ENCODE measurements at regions of chr9 and their contacts with region 1.

Region 1: GRCh38 chr9:113591001-113591898 is 127.7 kb downstream of the RGS3 start:
- DNase-seq: peak; percentile 78
- H3K4me3 ChIP-seq: no peak overlapping the region; a peak in 1 of 4 replicates
- H3K27ac ChIP-seq: no peak overlapping the region
- H3K4me1 ChIP-seq: peaks cover 11 to 32% of the 10 kb centered on the region in 2 experiments
- H3K27me3 ChIP-seq: no peaks in the 10 kb centered on the region
- CTCF ChIP-seq: peak; percentile 93
- EP300 ChIP-seq: no peak
- RAD21 ChIP-seq: peak; percentile 99

Region 2: GRCh38 chr9:113446323-113446740 is 144.9 kb before region 1 on chr9:
- CTCF ChIA-PET with region 1: interaction called, 449 read pairs
- POLR2A ChIA-PET with region 1: no interaction called
- DNase-seq: peak; percentile 72
- H3K4me3 ChIP-seq: no peak overlapping the region; a peak in 1 of 4 replicates
- H3K27ac ChIP-seq: no peak overlapping the region
- H3K4me1 ChIP-seq: no peaks in the 10 kb centered on the region
- H3K27me3 ChIP-seq: no peaks in the 10 kb centered on the region
- CTCF ChIP-seq: peak; percentile 77
- EP300 ChIP-seq: no peak
- RAD21 ChIP-seq: peak; percentile 94

Region 3: GRCh38 chr9:113474360-113475028 is 116.8 kb before region 1 on chr9:
- CTCF ChIA-PET with region 1: interaction called, 13 read pairs
- POLR2A ChIA-PET with region 1: no interaction called
- DNase-seq: peak; percentile 60
- H3K4me3 ChIP-seq: no peak overlapping the region
- H3K27ac ChIP-seq: peak overlapping the region in 1 of 2 experiments; percentile 77; a peak in 2 of 4 replicates
- H3K4me1 ChIP-seq: peaks cover 0 to 25% of the 10 kb centered on the region in 2 experiments; a peak in 2 of 4 replicates
- H3K27me3 ChIP-seq: no peaks in the 10 kb centered on the region
- CTCF ChIP-seq: no peak
- EP300 ChIP-seq: peak in 1 of 2 experiments; percentile 59; a peak in 1 of 4 replicates
- RAD21 ChIP-seq: no peak

Region 4: GRCh38 chr9:113541019-113541900 is 50.0 kb before region 1 on chr9:
- CTCF ChIA-PET with region 1: interaction called, 13 read pairs
- POLR2A ChIA-PET with region 1: no interaction called
- DNase-seq: peak; percentile 62
- H3K4me3 ChIP-seq: no peak overlapping the region
- H3K27ac ChIP-seq: peak overlapping the region in 1 of 2 experiments; percentile 65; a peak in 2 of 4 replicates
- H3K4me1 ChIP-seq: peaks cover 0 to 50% of the 10 kb centered on the region in 2 experiments; a peak in 1 of 4 replicates
- H3K27me3 ChIP-seq: no peaks in the 10 kb centered on the region
- CTCF ChIP-seq: no peak
- EP300 ChIP-seq: no peak
- RAD21 ChIP-seq: no peak

Region 5: GRCh38 chr9:113602126-113603044 is 11.1 kb after region 1 on chr9:
- CTCF ChIA-PET with region 1: interaction called, 14 read pairs
- POLR2A ChIA-PET with region 1: interaction called, 13 read pairs
- DNase-seq: peak; percentile 57
- H3K4me3 ChIP-seq: no peak overlapping the region
- H3K27ac ChIP-seq: peak overlapping the region in 1 of 2 experiments; percentile 24; a peak in 2 of 4 replicates
- H3K4me1 ChIP-seq: peaks cover 21 to 41% of the 10 kb centered on the region in 2 experiments; a peak in 3 of 4 replicates
- H3K27me3 ChIP-seq: no peaks in the 10 kb centered on the region
- CTCF ChIP-seq: no peak
- EP300 ChIP-seq: no peak
- RAD21 ChIP-seq: no peak

Region 6: DNA sequence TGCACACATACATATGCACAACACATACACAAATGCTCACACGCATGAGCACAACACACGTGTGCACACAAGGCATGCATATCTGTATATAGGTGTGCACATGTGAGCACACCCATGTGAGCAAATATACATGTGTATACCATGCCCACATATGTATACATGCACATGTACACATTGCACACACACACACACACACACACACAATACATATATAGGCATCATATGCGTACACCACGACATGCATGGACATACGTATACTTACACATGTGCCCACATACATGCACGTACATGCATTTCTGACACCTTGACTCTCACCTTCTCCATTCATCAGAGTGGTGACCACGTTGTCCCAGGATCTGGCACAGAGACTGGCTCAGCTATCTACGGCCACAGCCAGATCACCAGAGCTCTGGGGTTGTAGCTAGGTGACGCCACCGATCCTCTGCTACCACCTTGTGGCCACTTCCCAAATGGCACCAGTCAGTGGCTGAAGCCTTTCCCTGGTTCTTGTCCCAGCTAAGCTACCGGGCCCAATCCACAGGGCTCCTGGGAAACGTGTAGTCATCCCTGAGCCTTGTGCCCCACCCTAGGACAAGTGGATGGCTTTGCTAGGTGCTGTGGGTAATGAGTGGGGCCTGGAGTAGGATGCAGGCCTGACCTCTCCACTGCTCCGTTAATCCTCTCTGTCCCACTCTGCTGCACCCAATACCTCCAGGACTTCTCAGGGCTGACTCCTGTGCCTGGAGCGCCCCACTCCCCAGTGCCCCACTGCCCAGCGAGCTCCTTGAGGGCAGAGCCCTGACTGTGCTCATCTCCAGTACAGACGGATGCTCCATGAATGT is 66.7 kb after region 1 on chr9:
- CTCF ChIA-PET with region 1: interaction called, 1,335 read pairs
- POLR2A ChIA-PET with region 1: interaction called, 13 read pairs
- DNase-seq: peak; percentile 83
- H3K4me3 ChIP-seq: no peak overlapping the region; a peak in 1 of 4 replicates
- H3K27ac ChIP-seq: no peak overlapping the region
- H3K4me1 ChIP-seq: peaks cover 11 to 15% of the 10 kb centered on the region in 2 experiments; a peak in 2 of 4 replicates
- H3K27me3 ChIP-seq: no peaks in the 10 kb centered on the region
- CTCF ChIP-seq: peak; percentile 90
- EP300 ChIP-seq: no peak
- RAD21 ChIP-seq: peak; percentile 99

Measured in SK-N-SH (cell line).